Dendritic cell treated with granulocyte-macrophage colony-stimulating factor and Interleukin-4, amounts not matched to agents 40 ng/mL and 50 ng/mL, for 4 days (primary cell): ENCODE measurements at regions of chr7 and their contacts with region 1.

Region 1: DNA sequence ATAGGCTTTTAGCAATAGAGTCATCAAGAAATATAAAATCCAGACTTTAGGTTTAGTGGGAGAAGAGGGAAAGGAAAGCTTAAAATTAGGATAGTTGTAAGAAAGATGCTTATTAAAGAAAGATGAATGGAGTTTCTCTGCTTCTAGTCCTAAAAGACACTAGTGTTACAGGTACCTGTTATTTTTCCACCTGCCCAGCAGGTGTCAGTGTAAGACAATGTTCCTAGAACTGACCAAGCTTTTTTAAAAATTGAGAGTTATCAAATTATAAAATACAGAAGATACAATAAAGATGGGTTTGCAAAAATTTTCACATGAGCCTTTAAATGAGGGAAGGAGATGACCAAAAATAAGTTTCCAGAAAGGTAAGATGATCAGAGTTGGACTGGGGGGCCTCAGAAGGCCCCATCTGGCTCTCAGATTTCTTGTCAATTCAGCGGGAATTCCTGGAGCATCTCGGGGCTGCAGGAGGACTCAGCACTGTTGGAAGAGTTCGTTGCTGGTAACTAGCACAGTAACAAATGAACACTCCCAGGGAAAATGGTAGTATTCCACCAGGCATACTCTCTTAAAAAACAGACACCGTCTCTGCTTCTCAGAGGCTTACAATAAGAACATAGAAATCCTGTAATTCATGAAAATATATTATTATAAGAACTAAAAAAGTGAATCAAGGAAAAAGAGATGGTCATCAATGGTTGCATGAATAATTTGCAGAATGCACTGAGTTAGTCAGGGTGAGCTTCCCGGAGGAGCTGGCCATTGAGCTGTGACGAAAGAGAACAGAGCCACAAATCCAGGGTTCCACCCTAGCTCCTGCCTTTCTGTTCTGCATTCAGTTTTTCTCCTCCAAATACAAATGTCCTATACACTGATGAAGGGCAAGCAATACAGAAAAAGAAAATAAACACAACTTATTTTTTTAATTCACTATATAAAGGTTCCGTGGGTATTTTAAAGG is 71.8 kb upstream of the PIK3CG start:
- H3K4me3 Mint-ChIP-seq: no peak overlapping the region
- H3K27ac Mint-ChIP-seq: no peak overlapping the region
- H3K4me1 Mint-ChIP-seq: no peaks in the 10 kb centered on the region
- H3K27me3 Mint-ChIP-seq: peaks cover 6% of the 10 kb centered on the region

Region 2: DNA sequence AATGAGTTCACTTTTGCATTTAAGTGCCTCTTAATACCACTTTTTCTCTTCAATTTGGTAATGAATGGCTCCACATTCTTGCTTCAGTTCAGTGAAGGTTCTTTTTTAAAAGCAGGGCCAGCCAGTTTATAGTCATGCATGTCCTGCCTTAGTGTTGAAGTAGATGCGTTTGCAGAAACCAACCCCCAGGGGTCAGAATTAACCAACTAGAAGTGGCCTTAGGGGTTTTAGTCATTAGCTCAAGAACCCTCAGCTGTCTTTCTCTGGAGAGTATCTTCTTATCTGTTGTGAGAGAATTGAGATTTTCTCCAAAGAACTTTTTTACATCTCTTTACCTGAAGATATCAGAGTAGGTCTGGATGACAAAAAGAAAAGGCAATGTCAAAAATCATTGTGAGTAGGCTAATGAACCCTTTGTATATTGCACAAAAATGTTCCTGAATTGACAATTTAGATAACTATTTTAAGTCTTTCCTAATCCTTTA is 154.0 kb after region 1 on chr7:
- intact Hi-C with region 1: loop called (anchors 5 kb)
- H3K4me3 Mint-ChIP-seq: no peak overlapping the region
- H3K27ac Mint-ChIP-seq: no peak overlapping the region
- H3K4me1 Mint-ChIP-seq: peaks cover 17% of the 10 kb centered on the region
- H3K27me3 Mint-ChIP-seq: no peaks in the 10 kb centered on the region